ENCODE measurements at regions of chr19 and their contacts with region 1.

Region 1: DNA sequence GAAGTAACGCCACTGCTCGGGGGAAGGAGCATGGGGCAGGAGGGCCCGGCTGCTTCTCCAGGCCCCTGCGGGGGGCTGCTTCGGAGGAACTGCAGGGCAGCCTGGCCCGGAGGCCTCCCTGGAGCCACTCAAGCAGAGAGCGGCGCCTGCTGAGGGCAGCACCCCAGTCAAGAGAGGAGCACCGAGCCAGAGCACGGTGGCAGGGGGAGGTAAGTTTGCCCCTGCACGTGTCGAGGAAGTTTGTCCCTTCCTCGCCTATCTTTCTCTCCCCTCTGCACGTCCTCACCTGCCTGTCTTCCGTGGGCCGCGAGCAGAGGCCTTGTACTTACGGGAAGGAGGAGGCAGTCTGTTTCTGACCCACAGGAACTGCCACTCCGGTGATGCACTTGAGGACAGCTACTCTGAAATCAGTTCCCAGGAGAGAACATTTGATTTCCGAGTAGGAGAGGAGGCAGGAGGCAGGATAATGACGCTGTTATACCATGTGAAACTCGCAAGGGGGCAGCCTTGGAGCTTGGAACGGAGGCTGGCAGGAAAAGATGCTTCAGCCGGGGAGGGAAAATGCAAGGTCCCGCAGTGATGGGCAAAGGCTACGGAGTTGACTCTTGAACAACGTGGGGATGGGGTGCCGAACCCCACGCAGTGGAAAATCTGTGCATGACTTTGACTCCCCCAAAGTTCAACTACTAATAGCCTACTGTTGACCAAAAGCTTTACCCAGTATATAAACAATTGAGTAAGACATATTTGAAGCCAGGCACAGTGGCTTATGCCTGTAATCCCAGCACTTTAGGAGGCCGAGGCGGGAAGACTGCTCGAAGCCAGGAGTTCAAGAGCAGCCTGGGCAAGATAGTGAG is 5.0 kb downstream of the FFAR1 start:
- DNase-seq: peak; percentile 59
- ATAC-seq: peak; percentile 81

Region 2: GRCh38 chr19:35436477-35437405 is 84.1 kb after region 1 on chr19:
- intact Hi-C with region 1: no loop called
- DNase-seq: no peak
- ATAC-seq: peak; percentile 63

Region 3: DNA sequence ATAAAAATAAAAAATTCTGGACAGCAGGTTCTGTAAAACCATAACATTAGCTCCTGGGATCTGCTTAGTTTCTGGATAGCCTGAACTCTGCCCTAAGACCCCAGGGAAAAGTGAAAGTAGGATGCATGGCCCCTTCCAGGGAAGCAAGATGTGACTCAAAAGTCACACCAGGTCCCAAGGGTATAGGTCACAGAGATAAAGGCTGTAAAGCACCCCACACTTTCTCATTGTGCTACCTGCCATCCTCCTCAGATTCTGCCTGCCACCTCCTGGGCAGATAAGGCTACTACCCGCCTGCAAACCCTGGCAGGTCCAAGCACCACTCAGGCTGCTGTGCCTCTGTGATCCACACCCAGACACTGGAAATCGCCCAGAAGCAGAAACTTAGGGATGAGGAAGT is 116.0 kb after region 1 on chr19:
- intact Hi-C with region 1: loop called (anchors 5 kb)
- DNase-seq: peak; percentile 59
- ATAC-seq: peak; percentile 89

Region 4: GRCh38 chr19:35495107-35496064 is 142.7 kb after region 1 on chr19:
- intact Hi-C with region 1: loop called (anchors 5 kb)
- DNase-seq: peak; percentile 75
- ATAC-seq: peak; percentile 94

Measured in Right ventricle myocardium superior (tissue), 1 donor.